Ascending aorta (tissue), 2 donors: ENCODE measurements at regions of chr2 and their contacts with region 1.

Region 1: DNA sequence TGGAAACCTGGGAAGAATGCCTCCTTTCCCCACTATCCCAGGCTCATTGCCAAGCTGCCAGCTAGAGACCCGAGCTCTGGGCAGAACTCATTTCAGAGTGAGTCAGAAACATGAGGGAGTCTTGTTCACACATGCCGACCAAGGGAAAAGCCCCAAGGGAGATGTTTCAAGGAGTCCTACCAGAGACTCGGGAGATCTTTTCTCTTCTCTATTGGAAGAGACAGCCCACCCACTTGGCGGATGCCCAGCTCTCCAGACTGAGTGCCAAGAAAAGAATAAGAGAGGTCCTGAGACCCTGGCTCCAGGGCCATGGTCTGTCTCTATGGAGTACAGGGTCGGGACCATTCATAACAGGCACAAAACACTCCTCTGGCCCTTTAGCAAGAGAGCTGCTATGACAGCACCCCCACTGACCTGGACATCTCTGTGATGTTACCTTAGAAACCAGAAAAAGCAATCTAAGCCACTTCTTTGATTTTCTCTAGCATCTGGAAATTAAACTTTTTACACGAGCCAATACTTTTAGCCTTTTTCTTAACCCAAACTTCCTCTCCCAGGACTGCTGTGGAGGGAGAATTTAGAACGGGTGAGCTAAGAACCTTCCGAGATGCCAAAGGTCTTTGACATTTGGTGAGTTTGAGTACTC is 18.5 kb upstream of the IGFBP5 start:
- DNase-seq: peak; percentile 36 to 89
- H3K4me3 ChIP-seq: no peak overlapping the region
- H3K27ac ChIP-seq: peak overlapping the region; percentile 60 to 75
- H3K4me1 ChIP-seq: peaks cover 7 to 26% of the 10 kb centered on the region in 2 donors
- H3K27me3 ChIP-seq: no peaks in the 10 kb centered on the region
- CTCF ChIP-seq: no peak

Region 2: GRCh38 chr2:216829533-216829932 is 115.7 kb after region 1 on chr2:
- intact Hi-C with region 1: no loop called
- DNase-seq: peak; percentile 28 to 89
- H3K4me3 ChIP-seq: no peak overlapping the region
- H3K27ac ChIP-seq: peak overlapping the region in 1 of 2 donors; percentile 6
- H3K4me1 ChIP-seq: peaks cover 11 to 29% of the 10 kb centered on the region in 2 donors
- H3K27me3 ChIP-seq: no peaks in the 10 kb centered on the region
- CTCF ChIP-seq: no peak

Region 3: DNA sequence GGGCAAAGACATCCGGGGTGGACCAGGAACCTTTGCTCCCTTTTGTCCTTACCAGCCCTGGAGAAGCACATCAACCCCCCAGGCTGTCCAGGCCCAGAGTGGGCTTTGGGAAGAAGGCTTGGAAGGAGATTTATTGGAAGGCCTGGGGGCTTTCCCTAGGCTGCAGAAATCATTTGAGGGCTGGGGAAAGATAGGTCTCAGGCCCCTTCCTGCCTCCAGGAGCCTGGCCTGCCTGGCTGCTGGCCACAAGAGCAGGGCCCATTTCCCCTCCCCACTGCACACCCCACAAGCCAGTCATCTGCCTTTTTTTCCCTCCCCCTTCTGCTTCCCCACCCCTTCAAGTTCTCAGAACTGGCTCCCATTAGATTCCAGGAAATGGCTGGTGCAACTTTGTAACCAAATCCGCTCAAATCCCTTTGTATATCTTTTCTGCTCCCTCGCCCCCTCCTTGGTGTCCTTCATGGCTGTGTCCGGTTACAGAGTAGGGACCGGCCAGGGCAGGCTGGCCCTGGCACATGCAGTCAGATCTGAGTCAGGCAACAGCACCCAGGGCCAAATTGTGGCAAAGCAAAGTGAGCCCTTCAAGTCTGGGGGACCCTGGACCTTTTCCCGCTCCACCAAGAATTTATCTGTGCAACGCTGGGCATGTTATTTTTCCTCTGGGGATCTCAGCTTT is 166.8 kb after region 1 on chr2:
- intact Hi-C with region 1: loop called (anchors 5 kb)
- DNase-seq: peak in 1 of 2 donors; percentile 65
- H3K4me3 ChIP-seq: no peak overlapping the region
- H3K27ac ChIP-seq: peak overlapping the region; percentile 28 to 38
- H3K4me1 ChIP-seq: peaks cover 4 to 15% of the 10 kb centered on the region in 2 donors
- H3K27me3 ChIP-seq: no peaks in the 10 kb centered on the region
- CTCF ChIP-seq: no peak

Region 4: GRCh38 chr2:216974321-216975302 is 260.8 kb after region 1 on chr2:
- intact Hi-C with region 1: loop called (anchors 5 kb)
- DNase-seq: peak in 1 of 2 donors; percentile 77
- H3K4me3 ChIP-seq: no peak overlapping the region
- H3K27ac ChIP-seq: peak overlapping the region; percentile 85
- H3K4me1 ChIP-seq: peaks cover 7 to 52% of the 10 kb centered on the region in 2 donors
- H3K27me3 ChIP-seq: no peaks in the 10 kb centered on the region
- CTCF ChIP-seq: no peak